ENCODE measurements at regions of chr3 and their contacts with region 1.

Region 1: GRCh38 chr3:33636125-33636850 is 81.8 kb downstream of the CLASP2 start:
- DNase-seq: peak in 1 of 2 donors; percentile 77
- H3K4me3 ChIP-seq: no peak overlapping the region
- H3K27ac ChIP-seq: peak overlapping the region in 1 of 5 donors; percentile 21
- H3K4me1 ChIP-seq: peaks cover 0 to 12% (median 5%) of the 10 kb centered on the region in 4 donors
- H3K27me3 ChIP-seq: no peaks in the 10 kb centered on the region
- CTCF ChIP-seq: peak in 5 of 7 experiments; percentile 28 to 56 (median 48)
- EP300 ChIP-seq: no peak
- POLR2A ChIP-seq: no peak

Region 2: DNA sequence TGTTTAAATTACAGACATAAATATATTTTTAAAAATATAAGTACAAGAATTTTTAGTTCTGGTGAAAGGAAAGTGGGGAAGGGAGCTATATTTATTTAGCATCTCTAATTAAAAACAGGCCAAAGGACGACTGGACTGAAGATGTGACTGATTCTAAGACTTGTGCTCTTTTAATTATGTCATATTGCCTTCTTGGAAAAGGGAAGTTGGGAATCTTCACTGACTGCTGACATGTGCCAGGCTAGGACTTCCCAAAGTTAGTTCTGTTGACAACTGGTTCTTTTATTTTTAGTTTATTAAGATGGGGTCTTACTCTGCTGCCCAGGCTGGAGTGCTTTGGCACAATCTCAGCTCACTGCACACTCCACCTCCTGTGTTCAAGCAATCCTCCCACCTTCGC is 937.8 kb before region 1 on chr3:
- intact Hi-C with region 1: no loop called
- DNase-seq: no peak
- H3K4me3 ChIP-seq: no peak overlapping the region
- H3K27ac ChIP-seq: no peak overlapping the region
- H3K4me1 ChIP-seq: peaks cover 0 to 8% (median 0%) of the 10 kb centered on the region in 4 donors
- H3K27me3 ChIP-seq: no peaks in the 10 kb centered on the region
- CTCF ChIP-seq: no peak
- EP300 ChIP-seq: no peak
- POLR2A ChIP-seq: no peak

Region 3: DNA sequence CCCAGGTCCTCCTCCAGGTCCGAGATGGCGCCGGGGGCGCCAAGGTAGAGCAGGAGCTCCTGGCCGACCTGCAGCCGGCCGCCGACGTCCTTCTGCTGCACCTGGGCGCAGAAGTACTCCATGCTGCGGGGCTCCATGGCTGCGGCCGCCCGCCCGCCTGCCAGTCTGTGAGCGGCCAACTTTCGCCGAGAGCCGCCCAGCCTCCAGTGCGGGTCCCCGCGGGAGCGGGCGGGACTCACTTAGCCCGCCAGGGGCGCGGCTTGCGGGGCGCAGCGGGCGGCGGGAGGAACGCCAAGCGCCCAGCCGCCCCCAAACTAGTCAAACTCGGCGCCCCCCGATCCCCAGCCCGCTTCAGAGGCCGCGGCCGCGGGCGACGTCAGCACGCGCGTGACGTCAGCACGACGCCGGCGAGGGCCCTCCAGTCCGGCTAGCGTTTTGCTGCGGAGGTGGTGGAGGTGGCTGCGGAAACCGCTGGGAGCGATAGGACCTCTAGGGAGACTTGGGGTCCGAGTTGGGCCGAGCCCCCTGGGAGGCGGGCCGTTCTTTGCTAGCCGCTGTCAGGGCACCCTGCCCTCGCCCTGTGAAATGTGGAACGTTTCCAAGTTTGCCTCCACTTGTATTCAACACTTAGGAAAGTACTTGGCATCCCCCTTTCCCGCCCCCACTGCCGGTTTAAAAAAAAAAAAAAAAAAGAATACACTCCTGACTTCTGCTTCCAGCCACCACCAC is 81.7 kb after region 1 on chr3 and contains the start of gene CLASP2:
- intact Hi-C with region 1: loop called (anchors 10 kb)
- DNase-seq: peak; percentile 90 to 97
- H3K4me3 ChIP-seq: peak within 1 kb of the TSS; percentile 72 to 90 (median 88)
- H3K27ac ChIP-seq: peak within 1 kb of the TSS; percentile 91 to 100 (median 99)
- H3K4me1 ChIP-seq: peaks cover 10 to 39% (median 22%) of the 10 kb centered on the region in 4 donors
- H3K27me3 ChIP-seq: no peaks in the 10 kb centered on the region
- CTCF ChIP-seq: no peak
- EP300 ChIP-seq: no peak
- POLR2A ChIP-seq: peak in 2 of 4 donors; percentile 38 to 76
- total RNA-seq, gene CLASP2: 40.8 to 136 (median 81.0) TPM

Region 4: GRCh38 chr3:33779751-33780150 is 143.5 kb after region 1 on chr3:
- intact Hi-C with region 1: loop called (anchors 5 kb)
- DNase-seq: no peak
- H3K4me3 ChIP-seq: no peak overlapping the region
- H3K27ac ChIP-seq: no peak overlapping the region
- H3K4me1 ChIP-seq: no peaks in the 10 kb centered on the region
- H3K27me3 ChIP-seq: no peaks in the 10 kb centered on the region
- CTCF ChIP-seq: no peak
- EP300 ChIP-seq: no peak
- POLR2A ChIP-seq: no peak